Activated B cell treated with CpG ODN at 0.5 μM for 24 hours (primary cell): ENCODE measurements at regions of chr7 and their contacts with region 1.

Region 1: GRCh38 chr7:113015032-113015645 is 71.5 kb downstream of the GPR85 start:
- DNase-seq: no peak
- ATAC-seq: no peak
- H3K4me3 Mint-ChIP-seq: no peak overlapping the region
- H3K27ac Mint-ChIP-seq: no peak overlapping the region
- H3K4me1 Mint-ChIP-seq: no peaks in the 10 kb centered on the region
- H3K27me3 Mint-ChIP-seq: peaks cover 2% of the 10 kb centered on the region
- CTCF ChIP-seq: no peak

Region 2: DNA sequence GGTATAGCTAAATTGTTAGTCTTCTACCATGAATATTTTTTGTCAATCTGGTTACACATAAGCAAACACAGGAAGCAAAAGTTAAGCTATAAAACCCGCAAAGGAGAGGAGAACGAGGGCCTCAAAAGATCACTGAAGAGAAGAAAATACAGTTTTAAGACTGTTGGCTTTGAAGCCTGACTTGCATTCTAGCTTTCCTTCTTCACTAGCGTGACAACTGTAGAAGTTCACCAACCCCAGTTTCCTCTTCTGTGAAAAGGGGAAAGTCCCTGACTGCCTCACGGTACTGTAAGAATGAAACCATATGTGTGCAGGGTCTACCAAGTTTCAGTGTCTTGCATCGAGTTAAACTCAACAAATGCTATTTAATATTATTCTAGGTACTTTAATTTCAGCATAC is 1931.7 kb before region 1 on chr7:
- CTCF ChIA-PET with region 1: no interaction called
- POLR2A ChIA-PET with region 1: no interaction called
- intact Hi-C with region 1: no loop called
- DNase-seq: no peak
- ATAC-seq: peak; percentile 96
- H3K4me3 Mint-ChIP-seq: peak overlapping the region; percentile 59
- H3K27ac Mint-ChIP-seq: peak overlapping the region; percentile 90
- H3K4me1 Mint-ChIP-seq: peaks cover 48% of the 10 kb centered on the region
- H3K27me3 Mint-ChIP-seq: no peaks in the 10 kb centered on the region
- CTCF ChIP-seq: no peak

Region 3: DNA sequence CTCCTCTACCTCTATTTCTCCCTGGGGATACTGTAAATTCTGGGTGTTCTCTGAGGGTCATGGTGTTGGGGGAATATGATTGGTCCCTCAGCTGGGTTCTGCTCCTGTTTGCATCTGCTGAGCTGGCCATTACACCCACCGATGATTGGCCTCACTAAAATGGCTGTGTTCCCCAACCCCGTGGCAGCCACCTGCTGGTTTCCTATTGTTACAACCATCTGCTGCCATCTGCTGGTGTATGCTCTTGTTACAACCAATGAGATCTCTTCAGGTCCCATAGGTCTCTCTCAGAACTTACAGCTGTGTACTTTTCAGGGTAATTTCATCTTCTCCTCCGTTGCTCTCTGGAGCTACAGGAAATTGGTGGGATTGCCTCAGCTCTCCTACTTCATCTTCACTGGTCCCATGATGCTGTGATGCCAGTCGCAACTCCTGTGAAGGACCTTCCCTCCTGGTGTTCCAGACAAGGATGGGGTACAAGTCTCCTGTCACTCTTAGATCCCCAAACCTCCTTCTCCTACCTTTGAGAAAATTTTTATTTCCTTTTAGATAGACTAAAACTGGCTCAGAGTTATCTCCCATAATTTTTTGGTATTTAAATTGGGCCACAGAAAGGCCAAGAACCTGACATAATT is 406.7 kb after region 1 on chr7:
- CTCF ChIA-PET with region 1: interaction called, 3 read pairs
- POLR2A ChIA-PET with region 1: no interaction called
- intact Hi-C with region 1: loop called (anchors 1 kb)
- DNase-seq: peak; percentile 32
- ATAC-seq: peak; percentile 99
- H3K4me3 Mint-ChIP-seq: no peak overlapping the region
- H3K27ac Mint-ChIP-seq: no peak overlapping the region
- H3K4me1 Mint-ChIP-seq: peaks cover 3% of the 10 kb centered on the region
- H3K27me3 Mint-ChIP-seq: no peaks in the 10 kb centered on the region
- CTCF ChIP-seq: no peak